ENCODE measurements at regions of chr6 and their contacts with region 1.

Region 1: DNA sequence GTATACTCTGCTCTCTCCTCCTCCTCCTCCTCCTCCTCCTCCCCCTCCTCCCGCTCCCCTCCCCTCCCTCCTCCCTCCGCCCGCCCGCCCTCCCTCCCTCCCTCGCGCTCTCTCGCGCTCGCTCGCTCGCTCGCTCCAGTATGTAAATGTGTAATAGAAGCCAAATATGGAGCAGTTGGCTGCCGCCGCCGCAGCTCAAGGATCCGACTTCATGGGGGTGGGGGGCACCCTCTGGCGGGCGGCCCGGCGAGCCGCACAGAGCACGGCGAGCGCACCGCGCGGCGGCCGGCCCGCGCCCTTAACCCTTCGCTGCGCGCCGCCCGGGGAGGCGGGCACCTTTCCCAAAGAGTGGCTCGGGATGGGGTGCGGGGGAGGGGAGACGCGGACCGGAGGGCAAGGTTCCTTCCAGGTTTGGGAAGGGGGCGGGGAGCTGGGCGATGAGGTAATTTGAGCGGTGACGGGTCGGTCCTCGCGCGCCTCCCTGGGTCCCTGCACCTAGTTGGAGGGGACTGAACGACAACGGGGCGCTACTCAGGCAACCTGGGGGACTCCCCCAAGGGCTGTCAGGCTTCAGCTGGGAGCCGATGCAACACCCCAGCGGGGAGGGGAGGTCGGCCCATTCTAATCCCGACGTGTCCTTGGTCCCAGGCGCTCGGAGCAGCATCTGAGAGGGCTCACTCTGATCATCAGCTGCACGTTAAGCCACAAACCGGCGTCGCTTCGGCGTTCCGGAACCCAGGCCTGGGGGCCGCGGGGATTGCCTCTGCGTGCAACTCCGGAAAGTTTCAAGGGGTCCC is 409 bp upstream of the ATXN1 start:
- DNase-seq: peak; percentile 93
- H3K4me3 ChIP-seq: peak overlapping the region; percentile 87 to 90
- H3K27ac ChIP-seq: peak overlapping the region; percentile 85 to 97
- H3K4me1 ChIP-seq: peaks cover 20% of the 10 kb centered on the region
- H3K27me3 ChIP-seq: no peaks in the 10 kb centered on the region
- CTCF ChIP-seq: peak in 1 of 3 experiments; percentile 29
- POLR2A ChIP-seq: no peak

Region 2: GRCh38 chr6:16338577-16339262 is 422.9 kb before region 1 on chr6:
- intact Hi-C with region 1: loop called (anchors 5 kb)
- DNase-seq: peak; percentile 67
- H3K4me3 ChIP-seq: no peak overlapping the region
- H3K27ac ChIP-seq: no peak overlapping the region
- H3K4me1 ChIP-seq: peaks cover 17% of the 10 kb centered on the region
- H3K27me3 ChIP-seq: no peaks in the 10 kb centered on the region
- CTCF ChIP-seq: peak in 2 of 3 experiments; percentile 27 to 29
- POLR2A ChIP-seq: no peak

Region 3: DNA sequence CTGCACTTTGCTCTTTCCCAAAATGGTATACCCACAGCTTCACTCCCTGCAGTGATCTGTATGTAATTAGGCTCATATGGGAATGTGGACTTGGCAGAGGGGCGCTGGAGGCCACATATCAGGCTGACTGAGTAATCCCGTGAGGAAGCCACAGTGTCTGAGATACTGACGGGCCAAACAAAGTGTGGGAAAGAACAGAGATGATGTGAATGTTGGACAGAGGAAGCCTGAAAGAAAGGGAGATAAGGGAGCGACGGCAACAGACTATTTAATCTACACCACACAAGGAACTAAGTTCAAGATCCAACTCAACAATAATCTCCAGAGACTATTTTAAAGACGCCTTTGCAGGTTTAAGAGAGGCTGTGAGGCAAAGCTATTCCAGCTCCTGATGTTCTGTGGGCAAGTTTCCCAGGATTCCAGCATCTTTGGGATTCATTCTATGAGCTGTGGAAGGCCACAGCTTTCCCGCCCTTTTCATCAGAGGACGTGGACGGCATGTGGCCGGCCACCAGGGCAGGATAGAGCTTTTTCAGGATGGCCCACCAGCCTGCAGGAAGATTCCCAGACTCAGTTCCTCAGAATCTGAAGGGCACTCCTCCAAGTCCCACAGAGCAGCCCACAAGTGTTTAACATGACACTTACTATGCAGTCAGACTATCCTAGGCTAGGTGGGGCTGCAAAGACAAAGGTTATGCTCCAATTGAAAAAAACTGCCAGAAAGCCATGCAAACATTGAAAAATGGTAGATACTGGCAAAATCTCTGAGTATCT is 237.9 kb before region 1 on chr6:
- intact Hi-C with region 1: loop called (anchors 10 kb)
- DNase-seq: no peak
- H3K4me3 ChIP-seq: no peak overlapping the region
- H3K27ac ChIP-seq: no peak overlapping the region
- H3K4me1 ChIP-seq: no peaks in the 10 kb centered on the region
- H3K27me3 ChIP-seq: no peaks in the 10 kb centered on the region
- CTCF ChIP-seq: no peak
- POLR2A ChIP-seq: no peak

Measured in testis (tissue), 5 donors.